HepG2 (cell line): ENCODE measurements at regions of chr7 and their contacts with region 1.

Region 1: DNA sequence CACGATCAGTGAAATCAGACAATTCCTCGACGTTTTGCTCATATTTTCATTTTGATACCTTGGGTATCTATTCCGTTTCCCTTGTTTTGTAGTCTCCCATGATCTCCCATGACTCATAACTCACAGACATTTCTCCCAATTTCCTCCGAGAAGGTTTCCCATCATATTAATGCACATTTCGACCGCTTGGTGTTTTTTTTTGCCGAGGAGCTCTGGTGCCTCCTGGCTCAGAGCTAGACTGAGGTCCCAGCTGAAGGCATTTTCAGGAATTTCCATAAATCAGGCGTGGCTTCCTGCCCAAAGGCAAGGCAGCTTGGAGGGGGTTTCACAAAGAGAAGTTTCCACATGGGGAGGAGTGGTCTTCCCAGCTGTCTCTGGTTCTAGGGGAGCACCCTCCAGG is 148.2 kb upstream of the TNS3 start:
- DNase-seq: no peak
- ATAC-seq: no peak
- H3K4me3 ChIP-seq: no peak overlapping the region
- H3K27ac ChIP-seq: no peak overlapping the region
- H3K4me1 ChIP-seq: peaks cover 60% of the 10 kb centered on the region
- H3K27me3 ChIP-seq: no peaks in the 10 kb centered on the region
- CTCF ChIP-seq: no peak
- EP300 ChIP-seq: no peak
- POLR2A ChIP-seq: no peak
- RAD21 ChIP-seq: no peak

Region 2: GRCh38 chr7:47444379-47445057 is 285.6 kb before region 1 on chr7:
- CTCF ChIA-PET with region 1: no interaction called
- POLR2A ChIA-PET with region 1: no interaction called
- in situ Hi-C with region 1: no loop called
- intact Hi-C with region 1: loop called (anchors 1 kb)
- DNase-seq: peak; percentile 49
- ATAC-seq: peak; percentile 46
- H3K4me3 ChIP-seq: no peak overlapping the region
- H3K27ac ChIP-seq: no peak overlapping the region
- H3K4me1 ChIP-seq: peaks cover 60% of the 10 kb centered on the region
- H3K27me3 ChIP-seq: no peaks in the 10 kb centered on the region
- CTCF ChIP-seq: peak; percentile 56
- EP300 ChIP-seq: 0 out of 4 replicates have a peak, but pooled peaks of 1 of the 2 experiments have one; percentile 12
- POLR2A ChIP-seq: no peak
- RAD21 ChIP-seq: peak; percentile 56; the same call in 1 of the 2 replicates

Region 3: GRCh38 chr7:47536661-47537611 is 193.2 kb before region 1 on chr7:
- CTCF ChIA-PET with region 1: no interaction called
- POLR2A ChIA-PET with region 1: interaction called, 3 read pairs
- in situ Hi-C with region 1: no loop called
- intact Hi-C with region 1: loop called (anchors 5 kb)
- DNase-seq: no peak
- ATAC-seq: no peak
- H3K4me3 ChIP-seq: peak overlapping the region; percentile 6 to 72 (median 41); a peak in 5 of 6 replicates
- H3K27ac ChIP-seq: peak overlapping the region; percentile 86
- H3K4me1 ChIP-seq: peaks cover 96% of the 10 kb centered on the region
- H3K27me3 ChIP-seq: no peaks in the 10 kb centered on the region; a peak in 1 of 5 replicates
- CTCF ChIP-seq: no peak
- EP300 ChIP-seq: no peak
- POLR2A ChIP-seq: no peak
- RAD21 ChIP-seq: no peak

Region 4: DNA sequence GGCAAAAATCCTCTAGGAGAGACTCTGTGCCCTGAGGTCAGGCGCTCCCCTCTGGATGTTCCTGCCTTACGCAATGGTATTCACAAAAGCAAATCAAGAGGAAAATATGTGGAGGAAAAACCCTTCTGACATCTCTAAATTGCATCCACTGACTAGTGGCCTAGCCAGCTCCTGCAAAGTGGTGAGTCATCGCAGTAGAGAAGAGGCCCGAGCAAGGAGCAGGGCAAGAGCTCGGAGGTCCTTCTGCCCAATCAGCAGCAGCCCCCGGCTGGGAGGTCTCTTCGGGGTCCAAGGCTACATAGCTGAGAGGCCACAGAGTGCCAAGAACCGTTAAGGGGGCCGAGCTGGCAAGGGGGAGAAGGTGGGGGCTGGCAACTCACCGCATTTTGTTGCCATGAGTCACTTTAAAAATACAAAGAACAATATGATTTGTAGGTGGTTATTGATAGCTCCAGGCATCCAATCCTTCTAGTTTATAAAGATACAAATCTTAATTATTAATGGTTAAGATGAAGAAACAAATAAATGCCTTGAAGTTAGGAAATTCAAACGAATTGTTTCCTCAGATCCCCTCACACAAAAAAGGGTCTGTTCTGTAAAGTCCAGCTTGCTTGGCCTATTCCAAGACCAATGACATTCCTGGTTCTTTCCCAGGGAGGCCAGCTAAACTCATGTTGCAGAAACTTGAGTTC is 56.6 kb after region 1 on chr7:
- CTCF ChIA-PET with region 1: no interaction called
- POLR2A ChIA-PET with region 1: interaction called, 39 read pairs
- in situ Hi-C with region 1: no loop called
- intact Hi-C with region 1: loop called (anchors 2 kb)
- DNase-seq: peak; percentile 97
- ATAC-seq: peak; percentile 95
- H3K4me3 ChIP-seq: peak overlapping the region in 2 of 3 experiments; percentile 27 to 28; a peak in 4 of 6 replicates
- H3K27ac ChIP-seq: peak overlapping the region; percentile 92
- H3K4me1 ChIP-seq: peaks cover 68% of the 10 kb centered on the region
- H3K27me3 ChIP-seq: no peaks in the 10 kb centered on the region
- CTCF ChIP-seq: no peak
- EP300 ChIP-seq: peak; percentile 16 to 87; a peak in 3 of 4 replicates
- POLR2A ChIP-seq: peak in 1 of 2 experiments; percentile 49; a peak in 2 of 4 replicates
- RAD21 ChIP-seq: peak; percentile 43; the same call in 1 of the 2 replicates